CD14-positive monocyte (primary cell): ENCODE measurements at regions of chr14 and their contacts with region 1.

Region 1: GRCh38 chr14:91060351-91061055 is at the start of gene RPS6KA5:
- DNase-seq: peak; percentile 100
- H3K4me3 ChIP-seq: peak within 1 kb of the TSS; percentile 81 to 88 (median 85)
- H3K4me3 Mint-ChIP-seq: peak within 1 kb of the TSS; percentile 82 to 85
- H3K27ac ChIP-seq: peak within 1 kb of the TSS; percentile 84 to 94
- H3K27ac Mint-ChIP-seq: peak within 1 kb of the TSS in 6 of 7 donors; percentile 11 to 82 (median 58)
- H3K4me1 ChIP-seq: peaks cover 30 to 34% of the 10 kb centered on the region in 2 donors
- H3K4me1 Mint-ChIP-seq: peaks cover 33% of the 10 kb centered on the region
- H3K27me3 ChIP-seq: no peaks in the 10 kb centered on the region
- H3K27me3 Mint-ChIP-seq: no peaks in the 10 kb centered on the region
- CTCF ChIP-seq: peak; percentile 16
- polyA plus RNA-seq, gene RPS6KA5: 4.4 to 10.1 (median 7.9) TPM

Region 2: GRCh38 chr14:91009501-91010152 is 50.9 kb before region 1 on chr14:
- intact Hi-C with region 1: loop called (anchors 5 to 10 kb)
- DNase-seq: peak; percentile 86 to 98 (median 93)
- H3K4me3 ChIP-seq: peak overlapping the region in 2 of 3 experiments; percentile 47 to 64
- H3K4me3 Mint-ChIP-seq: peak overlapping the region; percentile 32 to 75
- H3K27ac ChIP-seq: peak overlapping the region; percentile 56 to 92
- H3K27ac Mint-ChIP-seq: peak overlapping the region; percentile 91 to 97 (median 95)
- H3K4me1 ChIP-seq: peaks cover 62 to 75% of the 10 kb centered on the region in 2 donors
- H3K4me1 Mint-ChIP-seq: peaks cover 48% of the 10 kb centered on the region
- H3K27me3 ChIP-seq: no peaks in the 10 kb centered on the region
- H3K27me3 Mint-ChIP-seq: no peaks in the 10 kb centered on the region
- CTCF ChIP-seq: no peak